ENCODE measurements at regions of chr5 and their contacts with region 1.

Region 1: DNA sequence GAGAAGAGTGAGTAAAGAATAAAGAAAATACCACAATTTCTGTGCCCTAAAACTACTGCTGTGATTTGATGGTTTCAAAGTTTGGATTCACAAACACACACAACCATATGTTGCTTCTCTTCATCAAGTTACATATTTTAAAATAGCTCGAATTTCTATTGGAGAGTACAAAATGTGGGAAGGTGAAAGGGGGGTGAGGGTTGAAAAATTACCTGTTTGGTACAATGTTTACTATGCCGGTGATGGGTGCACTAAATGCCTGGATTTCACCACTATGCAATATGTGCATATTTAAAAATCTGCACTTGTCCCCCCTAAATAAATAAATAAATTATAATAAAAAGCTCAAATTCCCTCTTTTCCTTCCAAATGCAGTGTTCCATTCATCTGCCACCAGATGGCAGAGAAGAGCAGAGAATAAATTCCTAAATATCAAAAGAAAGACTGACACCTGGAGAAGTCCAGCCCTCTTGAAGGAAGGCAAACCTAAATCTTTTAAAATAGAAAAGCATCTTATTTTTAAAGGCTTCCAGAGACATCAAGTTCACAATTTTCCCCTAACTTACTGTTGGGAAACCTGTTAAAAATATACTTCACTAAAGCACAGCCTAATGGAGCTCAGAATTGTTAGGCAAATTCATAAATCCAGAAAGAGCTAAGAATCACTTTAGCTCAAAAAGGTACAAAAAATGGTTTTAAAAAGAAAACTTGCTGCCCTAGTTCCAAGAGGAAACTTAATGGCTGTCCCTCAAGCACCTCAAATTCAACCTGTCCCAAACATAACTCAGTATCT is 24.8 kb upstream of the HNRNPA0 start:
- DNase-seq: peak; percentile 39
- ATAC-seq: peak; percentile 72
- H3K4me3 ChIP-seq: no peak overlapping the region
- H3K27ac ChIP-seq: no peak overlapping the region
- H3K4me1 ChIP-seq: no peaks in the 10 kb centered on the region
- H3K27me3 ChIP-seq: peaks cover 5% of the 10 kb centered on the region
- CTCF ChIP-seq: peak; percentile 77
- POLR2A ChIP-seq: no peak
- RAD21 ChIP-seq: peak; percentile 59

Region 2: GRCh38 chr5:137699336-137700281 is 79.4 kb before region 1 on chr5:
- CTCF ChIA-PET with region 1: no interaction called
- POLR2A ChIA-PET with region 1: no interaction called
- dilution Hi-C with region 1: no loop called
- in situ Hi-C with region 1: no loop called
- intact Hi-C with region 1: no loop called
- DNase-seq: peak; percentile 10
- ATAC-seq: no peak
- H3K4me3 ChIP-seq: no peak overlapping the region
- H3K27ac ChIP-seq: no peak overlapping the region
- H3K4me1 ChIP-seq: peaks cover 2% of the 10 kb centered on the region; the same call in 1 of the 2 replicates
- H3K27me3 ChIP-seq: no peaks in the 10 kb centered on the region
- CTCF ChIP-seq: no peak
- POLR2A ChIP-seq: no peak
- RAD21 ChIP-seq: no peak

Region 3: GRCh38 chr5:137714946-137715345 is 64.0 kb before region 1 on chr5:
- CTCF ChIA-PET with region 1: no interaction called
- POLR2A ChIA-PET with region 1: no interaction called
- dilution Hi-C with region 1: no loop called
- in situ Hi-C with region 1: no loop called
- intact Hi-C with region 1: no loop called
- DNase-seq: no peak
- ATAC-seq: 0 out of 2 replicates have a peak, but pooled peaks have one; percentile 14
- H3K4me3 ChIP-seq: no peak overlapping the region
- H3K27ac ChIP-seq: no peak overlapping the region
- H3K4me1 ChIP-seq: peaks cover 2% of the 10 kb centered on the region; the same call in 1 of the 2 replicates
- H3K27me3 ChIP-seq: no peaks in the 10 kb centered on the region
- CTCF ChIP-seq: no peak
- POLR2A ChIP-seq: no peak
- RAD21 ChIP-seq: no peak

Region 4: DNA sequence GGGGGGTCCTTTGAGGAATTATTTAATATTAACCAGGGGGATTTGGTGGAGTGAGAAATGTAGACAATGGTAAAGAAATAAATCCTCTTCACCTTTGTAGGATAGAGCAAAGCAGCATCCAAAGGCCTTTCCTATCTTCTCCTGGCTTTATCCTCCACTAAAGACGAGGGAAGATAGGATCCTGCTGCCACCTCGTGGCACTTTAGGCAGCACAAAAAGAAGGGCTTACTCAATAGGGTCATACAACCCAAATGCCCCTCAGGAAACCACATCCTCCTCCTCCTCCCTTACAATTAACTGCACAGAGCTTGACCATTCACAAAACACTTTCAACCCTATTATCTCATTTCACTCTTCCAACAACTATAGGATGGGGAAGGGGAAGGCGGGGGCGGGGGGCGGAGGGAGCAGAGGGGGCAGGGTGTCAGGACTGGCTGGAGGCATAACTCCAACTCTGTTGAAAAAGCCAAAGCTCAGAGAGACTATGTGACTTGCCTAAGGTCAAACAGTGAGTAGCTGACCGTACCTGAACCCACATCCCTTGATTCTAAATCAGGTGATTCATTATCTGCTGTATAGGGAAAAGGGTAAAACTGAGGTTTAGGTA is 43.3 kb after region 1 on chr5:
- CTCF ChIA-PET with region 1: no interaction called
- POLR2A ChIA-PET with region 1: no interaction called
- dilution Hi-C with region 1: no loop called
- in situ Hi-C with region 1: no loop called
- intact Hi-C with region 1: loop called (anchors 5 kb)
- DNase-seq: peak; percentile 18
- ATAC-seq: peak; percentile 57
- H3K4me3 ChIP-seq: no peak overlapping the region
- H3K27ac ChIP-seq: no peak overlapping the region
- H3K4me1 ChIP-seq: no peaks in the 10 kb centered on the region
- H3K27me3 ChIP-seq: peaks cover 6% of the 10 kb centered on the region
- CTCF ChIP-seq: peak; percentile 45
- POLR2A ChIP-seq: no peak
- RAD21 ChIP-seq: peak; percentile 51

Region 5: DNA sequence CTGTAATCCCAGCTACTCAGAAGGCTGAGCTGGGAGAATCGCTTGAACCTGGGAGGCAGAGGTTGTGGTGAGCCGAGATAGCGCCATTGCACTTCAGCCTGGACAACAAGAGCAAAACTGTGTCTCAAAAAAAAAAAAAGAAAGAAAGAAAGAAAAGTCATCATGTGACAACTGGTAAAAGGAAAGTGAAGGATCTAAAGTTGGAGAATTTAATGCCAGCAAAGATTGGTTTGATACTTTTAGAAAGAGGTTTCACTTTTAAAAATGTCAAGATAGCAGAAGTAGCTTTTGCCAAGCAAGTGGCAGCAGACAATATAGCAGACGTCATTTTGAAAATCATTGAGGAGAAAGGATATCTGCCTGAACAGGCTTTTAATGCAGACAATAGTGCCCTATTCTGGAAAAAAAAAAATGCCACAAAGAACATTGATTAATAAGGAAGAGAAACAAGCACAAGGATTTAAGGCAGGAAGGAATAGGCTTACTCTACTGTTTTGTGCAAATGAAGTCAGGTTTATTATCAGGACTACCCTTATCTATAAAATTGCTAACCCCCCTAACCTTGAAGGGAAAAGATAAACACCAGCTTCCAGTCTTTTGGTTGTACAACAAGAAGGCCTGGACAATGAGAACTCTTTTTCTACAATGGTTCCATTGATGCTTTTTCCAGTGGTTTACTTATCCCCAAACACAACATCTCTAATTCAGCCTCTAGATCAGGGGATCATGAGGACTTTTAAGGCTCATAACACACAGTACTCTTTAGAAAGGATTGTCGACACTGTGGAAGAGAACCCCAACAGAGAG is 122.2 kb after region 1 on chr5:
- CTCF ChIA-PET with region 1: no interaction called
- POLR2A ChIA-PET with region 1: no interaction called
- dilution Hi-C with region 1: no loop called
- in situ Hi-C with region 1: no loop called
- intact Hi-C with region 1: no loop called
- DNase-seq: no peak
- ATAC-seq: no peak
- H3K4me3 ChIP-seq: no peak overlapping the region
- H3K27ac ChIP-seq: no peak overlapping the region
- H3K4me1 ChIP-seq: no peaks in the 10 kb centered on the region
- H3K27me3 ChIP-seq: peaks cover 6% of the 10 kb centered on the region
- CTCF ChIP-seq: no peak
- POLR2A ChIP-seq: no peak
- RAD21 ChIP-seq: no peak

Region 6: DNA sequence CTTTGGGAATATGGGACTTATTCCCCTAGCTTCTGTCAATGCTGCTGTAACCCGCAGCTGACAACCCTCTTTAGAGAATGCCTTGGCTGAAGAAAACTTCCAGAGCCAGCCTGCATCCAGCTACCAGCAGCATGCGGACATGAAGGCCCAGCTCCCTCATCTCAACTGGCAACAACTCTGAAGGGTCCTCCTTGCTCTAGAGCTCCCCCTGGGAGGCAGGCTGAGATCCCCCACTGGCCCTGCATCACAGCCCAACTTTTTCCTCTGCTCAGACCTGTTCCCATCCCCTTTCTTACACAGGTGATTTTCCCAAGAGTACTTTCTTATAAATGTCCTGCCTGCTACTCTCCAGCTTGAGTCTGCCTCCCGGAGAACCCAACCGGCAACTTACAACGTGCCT is 286.1 kb after region 1 on chr5:
- CTCF ChIA-PET with region 1: interaction called, 6 read pairs
- POLR2A ChIA-PET with region 1: no interaction called
- dilution Hi-C with region 1: no loop called
- in situ Hi-C with region 1: no loop called
- intact Hi-C with region 1: loop called (anchors 1 kb)
- DNase-seq: no peak
- ATAC-seq: no peak
- H3K4me3 ChIP-seq: no peak overlapping the region
- H3K27ac ChIP-seq: no peak overlapping the region
- H3K4me1 ChIP-seq: no peaks in the 10 kb centered on the region
- H3K27me3 ChIP-seq: no peaks in the 10 kb centered on the region; the same call in 1 of the 2 replicates
- CTCF ChIP-seq: peak; percentile 22; the same call in 1 of the 2 replicates
- POLR2A ChIP-seq: no peak
- RAD21 ChIP-seq: no peak

Region 7: DNA sequence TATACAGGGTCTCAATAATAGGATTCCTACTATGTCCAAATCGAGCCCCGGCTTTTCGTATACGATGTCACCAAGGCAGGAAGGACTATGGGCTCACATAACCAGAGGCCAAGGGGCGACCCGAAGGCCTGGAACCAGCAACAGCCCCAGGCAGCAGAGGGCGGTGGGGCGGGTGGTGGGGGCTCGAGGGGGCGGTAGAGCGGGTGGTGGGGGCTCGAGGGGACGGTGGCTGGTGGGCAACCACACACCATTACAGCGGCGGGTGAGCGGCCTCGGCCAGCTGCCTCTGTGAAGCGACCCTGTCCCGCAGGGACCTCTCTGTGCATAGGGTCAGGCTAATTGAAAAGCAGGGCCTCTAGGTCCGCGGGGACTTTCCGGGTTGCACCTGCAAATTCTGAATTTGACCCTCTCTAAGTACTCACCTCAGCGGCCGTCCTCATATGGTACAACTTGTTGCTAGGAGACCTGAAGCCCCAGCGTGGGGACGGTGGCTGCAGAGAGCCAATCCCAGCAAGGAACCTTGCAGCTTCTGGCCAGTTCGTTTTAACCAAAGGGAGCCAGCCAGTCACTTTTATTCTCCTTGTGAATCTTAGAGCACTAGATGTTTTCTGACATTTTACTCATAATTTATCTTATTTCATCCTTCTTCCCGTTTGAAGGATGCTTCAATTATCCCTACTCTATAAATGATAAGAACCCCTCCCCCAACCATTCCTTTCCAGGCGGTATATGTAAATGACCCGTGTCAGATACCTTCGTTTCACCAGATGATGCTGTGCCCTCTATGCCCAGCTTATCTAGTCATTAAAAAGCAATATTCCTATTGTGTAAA is 360.2 kb after region 1 on chr5 and contains the start of gene NME5:
- CTCF ChIA-PET with region 1: no interaction called
- POLR2A ChIA-PET with region 1: no interaction called
- dilution Hi-C with region 1: no loop called
- in situ Hi-C with region 1: loop called (anchors 10 kb)
- intact Hi-C with region 1: no loop called
- DNase-seq: peak; percentile 40
- ATAC-seq: peak; percentile 88
- H3K4me3 ChIP-seq: peak within 1 kb of the TSS; percentile 41
- H3K27ac ChIP-seq: no peak within 1 kb of the TSS
- H3K4me1 ChIP-seq: no peaks in the 10 kb centered on the region
- H3K27me3 ChIP-seq: no peaks in the 10 kb centered on the region; the same call in 1 of the 2 replicates
- CTCF ChIP-seq: no peak
- POLR2A ChIP-seq: no peak
- RAD21 ChIP-seq: no peak
- total RNA-seq, gene NME5: under 0.01 and 0.18 TPM in 2 replicates

Region 8: DNA sequence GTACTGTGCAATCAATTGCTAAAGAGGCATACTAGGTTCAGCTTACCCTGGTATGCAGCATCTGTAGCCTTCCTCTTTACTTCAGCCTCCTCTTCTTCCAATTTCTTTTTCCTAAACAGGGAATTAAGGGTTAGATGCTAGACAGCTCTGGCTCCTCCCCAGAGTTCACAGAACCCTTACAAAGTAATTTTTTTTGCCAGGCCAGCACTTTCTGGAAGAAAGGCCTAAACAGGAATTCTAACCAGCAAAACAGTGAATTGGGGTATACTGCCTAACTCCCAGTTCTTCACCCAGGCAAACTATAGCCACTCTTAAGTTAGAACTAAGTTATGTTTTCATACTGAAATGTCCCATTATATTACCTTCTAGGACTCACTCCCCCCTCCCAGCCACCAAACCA is 391.3 kb after region 1 on chr5:
- CTCF ChIA-PET with region 1: no interaction called
- POLR2A ChIA-PET with region 1: no interaction called
- dilution Hi-C with region 1: no loop called
- in situ Hi-C with region 1: no loop called
- intact Hi-C with region 1: no loop called
- DNase-seq: no peak
- ATAC-seq: no peak
- H3K4me3 ChIP-seq: no peak overlapping the region
- H3K27ac ChIP-seq: no peak overlapping the region
- H3K4me1 ChIP-seq: no peaks in the 10 kb centered on the region
- H3K27me3 ChIP-seq: no peaks in the 10 kb centered on the region
- CTCF ChIP-seq: no peak
- POLR2A ChIP-seq: no peak
- RAD21 ChIP-seq: no peak

Measured in IMR-90 (cell line).